Natural killer cell (primary cell): ENCODE measurements at regions of chr22 and their contacts with region 1.

Region 1: GRCh38 chr22:44632541-44633396 is 69.2 kb upstream of the PRR5 start:
- DNase-seq: peak in 1 of 2 donors; percentile 48
- ATAC-seq: peak; percentile 43 to 86 (median 74)
- H3K4me3 ChIP-seq: no peak overlapping the region
- H3K4me3 Mint-ChIP-seq: no peak overlapping the region
- H3K27ac ChIP-seq: peak overlapping the region; percentile 24
- H3K27ac Mint-ChIP-seq: no peak overlapping the region
- H3K4me1 ChIP-seq: peaks cover 28% of the 10 kb centered on the region
- H3K4me1 Mint-ChIP-seq: peaks cover 5 to 19% of the 10 kb centered on the region in 2 donors
- H3K27me3 ChIP-seq: no peaks in the 10 kb centered on the region
- H3K27me3 Mint-ChIP-seq: no peaks in the 10 kb centered on the region
- CTCF ChIP-seq: no peak

Region 2: DNA sequence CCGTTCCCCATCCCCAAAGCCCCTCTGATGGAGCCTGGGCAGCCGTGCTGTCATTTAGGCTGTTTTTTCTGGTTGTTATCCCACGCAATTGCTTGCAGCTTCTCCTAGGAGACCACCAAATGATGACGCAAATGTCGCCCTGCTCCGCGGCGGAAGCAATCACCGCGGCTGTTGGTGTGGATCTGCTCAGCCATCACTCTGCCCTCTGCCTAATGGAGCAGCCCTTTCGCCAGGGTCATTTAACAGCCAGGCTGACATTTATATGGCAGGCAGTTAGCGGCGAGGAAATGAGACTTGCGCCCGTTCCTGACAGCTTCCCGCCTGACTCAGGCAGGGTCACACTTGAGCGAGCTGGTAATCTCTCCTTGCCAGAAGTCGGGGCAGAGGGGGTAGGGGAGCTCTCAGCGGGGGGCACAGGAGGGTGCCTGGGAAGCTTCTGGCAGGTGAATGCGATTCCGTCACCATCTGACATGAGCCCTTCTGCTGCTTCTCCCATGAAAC is 36.9 kb before region 1 on chr22:
- intact Hi-C with region 1: no loop called
- DNase-seq: peak in 1 of 2 donors; percentile 14
- ATAC-seq: peak; percentile 34 to 82 (median 72)
- H3K4me3 ChIP-seq: no peak overlapping the region
- H3K4me3 Mint-ChIP-seq: no peak overlapping the region
- H3K27ac ChIP-seq: no peak overlapping the region
- H3K27ac Mint-ChIP-seq: peak overlapping the region in 1 of 2 donors; percentile 48
- H3K4me1 ChIP-seq: peaks cover 3% of the 10 kb centered on the region
- H3K4me1 Mint-ChIP-seq: peaks cover 8 to 19% of the 10 kb centered on the region in 2 donors
- H3K27me3 ChIP-seq: no peaks in the 10 kb centered on the region
- H3K27me3 Mint-ChIP-seq: peaks cover 19 to 20% of the 10 kb centered on the region in 2 donors
- CTCF ChIP-seq: no peak

Region 3: DNA sequence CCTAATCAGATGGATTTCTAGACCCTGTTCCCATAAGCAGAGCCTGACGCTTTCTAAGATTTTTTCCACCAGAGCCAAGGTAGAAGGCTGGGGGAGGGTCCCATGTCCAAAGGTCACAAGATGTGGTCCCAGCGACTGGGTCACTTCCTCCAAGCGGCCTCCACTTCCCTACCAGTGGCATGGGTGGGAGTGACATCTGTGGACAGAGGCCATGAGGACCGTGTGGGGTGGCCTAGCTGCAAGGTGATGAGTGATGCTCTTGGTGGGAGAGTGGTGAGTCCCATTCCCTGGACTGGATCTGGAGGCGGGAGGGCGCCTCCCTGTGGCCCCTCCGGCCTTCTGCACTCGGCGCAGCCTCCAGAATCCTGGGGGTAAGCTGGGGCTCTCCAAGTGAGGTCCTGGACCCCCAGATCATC is 36.8 kb after region 1 on chr22:
- intact Hi-C with region 1: loop called (anchors 5 kb)
- DNase-seq: peak in 1 of 2 donors; percentile 47
- ATAC-seq: no peak
- H3K4me3 ChIP-seq: peak overlapping the region; percentile 76
- H3K4me3 Mint-ChIP-seq: peak overlapping the region; percentile 83
- H3K27ac ChIP-seq: peak overlapping the region; percentile 71
- H3K27ac Mint-ChIP-seq: peak overlapping the region; percentile 70 to 93
- H3K4me1 ChIP-seq: peaks cover 79% of the 10 kb centered on the region
- H3K4me1 Mint-ChIP-seq: peaks cover 63 to 83% of the 10 kb centered on the region in 2 donors
- H3K27me3 ChIP-seq: no peaks in the 10 kb centered on the region
- H3K27me3 Mint-ChIP-seq: no peaks in the 10 kb centered on the region
- CTCF ChIP-seq: peak; percentile 31

Region 4: DNA sequence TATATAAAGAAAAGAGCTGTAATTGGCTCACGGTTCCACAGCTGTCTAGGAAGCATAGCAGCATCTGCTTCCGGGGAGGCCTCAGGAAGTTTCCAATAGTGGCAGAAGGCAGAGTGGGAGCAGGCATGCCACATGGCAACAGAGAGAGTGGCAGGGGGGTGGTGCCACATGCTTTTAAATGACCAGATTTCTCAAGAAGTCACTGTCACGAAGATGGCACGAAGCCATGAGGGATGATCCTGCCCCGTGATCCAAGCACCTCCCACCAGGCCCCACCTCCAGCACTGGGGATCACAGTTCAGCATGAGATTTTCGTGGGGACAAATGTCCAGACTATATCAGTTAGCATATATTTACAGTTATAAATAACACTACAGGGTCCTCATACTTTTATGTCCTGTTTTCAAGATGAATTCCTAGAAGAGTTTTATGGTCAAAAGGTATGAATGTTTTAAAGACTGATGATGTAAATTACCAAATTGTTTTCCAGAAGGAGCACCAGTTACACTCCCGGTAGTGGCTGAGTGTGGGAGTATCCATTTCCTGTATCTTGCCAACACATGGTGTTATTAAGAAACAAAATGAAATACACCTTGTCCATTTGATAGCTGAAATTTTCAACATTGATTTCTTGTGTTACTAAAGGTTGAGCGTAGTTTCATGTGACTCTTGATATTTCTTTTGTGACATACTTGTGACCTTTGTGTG is 696.2 kb after region 1 on chr22:
- intact Hi-C with region 1: no loop called
- DNase-seq: no peak
- ATAC-seq: no peak
- H3K4me3 ChIP-seq: no peak overlapping the region
- H3K4me3 Mint-ChIP-seq: no peak overlapping the region
- H3K27ac ChIP-seq: no peak overlapping the region
- H3K27ac Mint-ChIP-seq: no peak overlapping the region
- H3K4me1 ChIP-seq: peaks cover 5% of the 10 kb centered on the region
- H3K4me1 Mint-ChIP-seq: peaks cover 2 to 8% of the 10 kb centered on the region in 2 donors
- H3K27me3 ChIP-seq: no peaks in the 10 kb centered on the region
- H3K27me3 Mint-ChIP-seq: no peaks in the 10 kb centered on the region
- CTCF ChIP-seq: no peak